CD4-positive, alpha-beta T cell (primary cell): ENCODE measurements at regions of chr5 and their contacts with region 1.

Region 1: GRCh38 chr5:118126159-118126558 is 862.2 kb downstream of the DTWD2 start:
- DNase-seq: no peak
- ATAC-seq: no peak
- H3K4me3 ChIP-seq: no peak overlapping the region
- H3K4me3 Mint-ChIP-seq: no peak overlapping the region
- H3K27ac ChIP-seq: no peak overlapping the region
- H3K27ac Mint-ChIP-seq: no peak overlapping the region
- H3K4me1 ChIP-seq: no peaks in the 10 kb centered on the region
- H3K4me1 Mint-ChIP-seq: no peaks in the 10 kb centered on the region
- H3K27me3 ChIP-seq: no peaks in the 10 kb centered on the region
- H3K27me3 Mint-ChIP-seq: no peaks in the 10 kb centered on the region
- CTCF ChIP-seq: no peak

Region 2: DNA sequence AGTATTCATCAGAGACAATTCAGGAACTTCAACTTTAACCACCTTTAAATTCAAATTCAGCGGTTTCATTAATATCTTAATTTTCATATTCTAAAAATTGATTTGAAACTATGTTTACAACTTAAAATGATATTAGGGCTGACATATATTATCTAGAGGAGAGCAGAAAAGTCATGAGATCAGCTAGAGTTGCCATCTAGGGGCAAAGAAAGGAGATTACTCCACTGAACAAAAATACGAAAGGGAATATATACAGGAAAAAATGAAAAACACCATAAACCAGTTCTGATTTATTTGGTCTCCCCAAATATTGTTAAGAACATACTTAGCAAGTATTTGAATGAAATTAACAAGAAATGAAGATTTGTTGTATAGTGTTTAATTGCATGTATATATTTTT is 84.1 kb before region 1 on chr5:
- CTCF ChIA-PET with region 1: no interaction called
- POLR2A ChIA-PET with region 1: no interaction called
- intact Hi-C with region 1: no loop called
- DNase-seq: no peak
- ATAC-seq: no peak
- H3K4me3 ChIP-seq: no peak overlapping the region
- H3K4me3 Mint-ChIP-seq: no peak overlapping the region
- H3K27ac ChIP-seq: no peak overlapping the region
- H3K27ac Mint-ChIP-seq: no peak overlapping the region
- H3K4me1 ChIP-seq: no peaks in the 10 kb centered on the region
- H3K4me1 Mint-ChIP-seq: no peaks in the 10 kb centered on the region
- H3K27me3 ChIP-seq: no peaks in the 10 kb centered on the region
- H3K27me3 Mint-ChIP-seq: no peaks in the 10 kb centered on the region
- CTCF ChIP-seq: no peak

Region 3: DNA sequence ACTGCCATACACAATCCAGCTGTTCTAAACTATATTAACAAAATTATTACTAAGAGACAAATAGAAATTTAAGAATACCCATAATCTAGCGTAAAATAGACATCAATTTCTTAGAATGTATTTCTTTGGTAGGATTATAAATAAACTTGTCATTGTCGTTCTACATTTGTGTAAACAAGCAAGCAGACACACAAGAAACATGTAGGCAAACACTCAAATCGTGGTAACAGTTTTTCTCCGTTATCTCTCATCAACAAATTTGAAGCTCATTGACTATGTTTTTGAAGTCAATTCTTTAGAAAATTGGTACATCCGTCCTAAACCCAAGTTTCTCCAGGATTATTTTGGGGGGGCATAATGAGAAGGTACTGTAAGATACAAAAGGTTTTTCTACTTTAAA is 30.0 kb after region 1 on chr5:
- CTCF ChIA-PET with region 1: no interaction called
- POLR2A ChIA-PET with region 1: no interaction called
- intact Hi-C with region 1: loop called in 1 of 2 experiments (anchors 1 kb)
- DNase-seq: no peak
- ATAC-seq: no peak
- H3K4me3 ChIP-seq: no peak overlapping the region
- H3K4me3 Mint-ChIP-seq: no peak overlapping the region
- H3K27ac ChIP-seq: no peak overlapping the region
- H3K27ac Mint-ChIP-seq: no peak overlapping the region
- H3K4me1 ChIP-seq: no peaks in the 10 kb centered on the region
- H3K4me1 Mint-ChIP-seq: no peaks in the 10 kb centered on the region
- H3K27me3 ChIP-seq: no peaks in the 10 kb centered on the region
- H3K27me3 Mint-ChIP-seq: no peaks in the 10 kb centered on the region
- CTCF ChIP-seq: no peak